AG04449 (cell line): ENCODE measurements at regions of chr6 and their contacts with region 1.

Region 1: GRCh38 chr6:125906158-125906998 is 50.2 kb upstream of the HINT3 start:
- DNase-seq: no peak
- H3K4me3 ChIP-seq: no peak overlapping the region
- CTCF ChIP-seq: peak; percentile 59

Region 2: GRCh38 chr6:125918681-125919566 is 12.5 kb after region 1 on chr6:
- CTCF ChIA-PET with region 1: interaction called, 19 read pairs
- POLR2A ChIA-PET with region 1: no interaction called
- DNase-seq: no peak
- H3K4me3 ChIP-seq: no peak overlapping the region
- CTCF ChIP-seq: no peak

Region 3: GRCh38 chr6:126143761-126144251 is 237.4 kb after region 1 on chr6:
- CTCF ChIA-PET with region 1: no interaction called
- POLR2A ChIA-PET with region 1: no interaction called
- DNase-seq: no peak
- H3K4me3 ChIP-seq: no peak overlapping the region
- CTCF ChIP-seq: no peak